Right ventricle myocardium inferior (tissue), 1 donor: ENCODE measurements at regions of chr18 and their contacts with region 1.

Region 1: DNA sequence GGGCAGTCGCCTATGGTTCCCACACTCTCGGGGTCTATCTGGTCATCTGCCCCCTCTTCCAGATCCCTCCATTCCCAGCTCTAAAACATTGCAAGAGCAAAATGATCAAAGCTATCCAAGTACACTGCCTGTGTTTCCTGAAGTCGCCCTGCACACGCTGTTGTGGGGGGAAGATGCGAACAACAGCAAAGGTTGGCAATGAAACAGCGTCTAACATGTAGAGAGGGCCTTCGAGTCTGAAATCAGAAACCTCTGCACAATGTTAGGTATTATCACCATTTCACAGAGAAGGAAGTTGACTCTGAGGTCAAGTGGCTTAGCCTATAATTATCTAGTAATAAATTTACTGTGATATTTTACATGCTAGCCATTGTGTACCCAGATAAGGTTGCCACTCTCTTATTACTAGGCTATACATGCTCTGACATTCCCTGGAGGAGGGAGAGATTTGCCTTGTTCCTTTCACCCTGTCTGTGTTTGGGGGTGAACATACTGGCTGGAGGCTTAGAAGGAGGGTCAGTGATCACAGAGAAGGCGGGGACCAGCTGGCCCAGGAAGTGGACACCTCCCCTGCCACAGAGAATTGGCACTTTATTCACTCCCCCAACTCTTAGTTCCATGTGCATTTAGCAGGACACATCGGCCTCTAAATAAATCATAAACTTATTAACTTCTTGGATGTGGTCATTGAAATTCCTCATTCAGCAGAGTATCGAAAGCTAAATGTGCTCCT is 36.8 kb downstream of the KCTD1 start:
- DNase-seq: no peak
- ATAC-seq: peak; percentile 58

Region 2: GRCh38 chr18:26460449-26461091 is 50.9 kb before region 1 on chr18:
- intact Hi-C with region 1: loop called (anchors 5 kb)
- DNase-seq: no peak
- ATAC-seq: peak; percentile 88